HepG2 (cell line): ENCODE measurements at regions of chr7 and their contacts with region 1.

Region 1: GRCh38 chr7:128783143-128783861 is 7.7 kb upstream of the OPN1SW start:
- DNase-seq: peak; percentile 61
- ATAC-seq: peak; percentile 82
- H3K4me3 ChIP-seq: peak overlapping the region in 2 of 3 experiments; percentile 50 to 51; a peak in 4 of 6 replicates
- H3K27ac ChIP-seq: no peak overlapping the region
- H3K4me1 ChIP-seq: peaks cover 15% of the 10 kb centered on the region
- H3K27me3 ChIP-seq: no peaks in the 10 kb centered on the region
- CTCF ChIP-seq: no peak
- EP300 ChIP-seq: no peak
- POLR2A ChIP-seq: no peak
- RAD21 ChIP-seq: no peak

Region 2: DNA sequence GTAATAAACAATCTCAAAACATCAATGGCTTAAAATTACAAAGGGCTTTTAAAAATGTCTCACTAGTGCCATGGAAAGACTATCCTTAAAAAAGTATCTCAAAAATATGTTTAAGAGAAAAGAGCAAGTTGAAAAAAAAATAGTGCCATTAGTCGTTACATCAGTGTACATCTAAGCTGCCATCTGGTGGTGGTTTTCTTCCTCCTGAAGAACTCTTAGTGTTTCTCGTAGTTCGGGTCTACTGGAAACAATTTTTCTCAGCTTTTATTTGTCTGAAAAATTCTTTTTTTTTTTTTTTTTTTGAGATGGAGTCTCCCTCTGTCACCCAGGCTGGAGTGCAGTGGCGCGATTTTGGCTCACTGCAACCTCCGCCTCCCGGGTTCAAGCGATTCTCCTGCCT is 117.1 kb before region 1 on chr7:
- CTCF ChIA-PET with region 1: no interaction called
- POLR2A ChIA-PET with region 1: no interaction called
- in situ Hi-C with region 1: no loop called
- intact Hi-C with region 1: no loop called
- DNase-seq: peak; percentile 33
- ATAC-seq: peak; percentile 56
- H3K4me3 ChIP-seq: no peak overlapping the region
- H3K27ac ChIP-seq: no peak overlapping the region
- H3K4me1 ChIP-seq: no peaks in the 10 kb centered on the region
- H3K27me3 ChIP-seq: no peaks in the 10 kb centered on the region
- CTCF ChIP-seq: peak; percentile 43
- EP300 ChIP-seq: no peak
- POLR2A ChIP-seq: no peak
- RAD21 ChIP-seq: no peak

Region 3: GRCh38 chr7:128794020-128794419 is 10.7 kb after region 1 on chr7:
- CTCF ChIA-PET with region 1: no interaction called
- POLR2A ChIA-PET with region 1: no interaction called
- in situ Hi-C with region 1: no loop called
- intact Hi-C with region 1: no loop called
- DNase-seq: no peak
- ATAC-seq: no peak
- H3K4me3 ChIP-seq: no peak overlapping the region
- H3K27ac ChIP-seq: no peak overlapping the region
- H3K4me1 ChIP-seq: peaks cover 10% of the 10 kb centered on the region
- H3K27me3 ChIP-seq: peaks cover 7 to 36% of the 10 kb centered on the region in 2 experiments; a peak in 4 of 5 replicates
- CTCF ChIP-seq: peak; percentile 53
- EP300 ChIP-seq: no peak
- POLR2A ChIP-seq: no peak
- RAD21 ChIP-seq: no peak

Region 4: GRCh38 chr7:128841921-128842651 is 58.8 kb after region 1 on chr7:
- CTCF ChIA-PET with region 1: no interaction called
- POLR2A ChIA-PET with region 1: no interaction called
- in situ Hi-C with region 1: no loop called
- intact Hi-C with region 1: no loop called
- DNase-seq: no peak
- ATAC-seq: peak; percentile 64
- H3K4me3 ChIP-seq: no peak overlapping the region; a peak in 1 of 6 replicates
- H3K27ac ChIP-seq: no peak overlapping the region
- H3K4me1 ChIP-seq: peaks cover 11% of the 10 kb centered on the region
- H3K27me3 ChIP-seq: peaks cover 5 to 15% of the 10 kb centered on the region in 2 experiments; a peak in 2 of 5 replicates
- CTCF ChIP-seq: peak; percentile 68
- EP300 ChIP-seq: no peak
- POLR2A ChIP-seq: no peak
- RAD21 ChIP-seq: 0 out of 2 replicates have a peak, but pooled peaks have one; percentile 40

Region 5: DNA sequence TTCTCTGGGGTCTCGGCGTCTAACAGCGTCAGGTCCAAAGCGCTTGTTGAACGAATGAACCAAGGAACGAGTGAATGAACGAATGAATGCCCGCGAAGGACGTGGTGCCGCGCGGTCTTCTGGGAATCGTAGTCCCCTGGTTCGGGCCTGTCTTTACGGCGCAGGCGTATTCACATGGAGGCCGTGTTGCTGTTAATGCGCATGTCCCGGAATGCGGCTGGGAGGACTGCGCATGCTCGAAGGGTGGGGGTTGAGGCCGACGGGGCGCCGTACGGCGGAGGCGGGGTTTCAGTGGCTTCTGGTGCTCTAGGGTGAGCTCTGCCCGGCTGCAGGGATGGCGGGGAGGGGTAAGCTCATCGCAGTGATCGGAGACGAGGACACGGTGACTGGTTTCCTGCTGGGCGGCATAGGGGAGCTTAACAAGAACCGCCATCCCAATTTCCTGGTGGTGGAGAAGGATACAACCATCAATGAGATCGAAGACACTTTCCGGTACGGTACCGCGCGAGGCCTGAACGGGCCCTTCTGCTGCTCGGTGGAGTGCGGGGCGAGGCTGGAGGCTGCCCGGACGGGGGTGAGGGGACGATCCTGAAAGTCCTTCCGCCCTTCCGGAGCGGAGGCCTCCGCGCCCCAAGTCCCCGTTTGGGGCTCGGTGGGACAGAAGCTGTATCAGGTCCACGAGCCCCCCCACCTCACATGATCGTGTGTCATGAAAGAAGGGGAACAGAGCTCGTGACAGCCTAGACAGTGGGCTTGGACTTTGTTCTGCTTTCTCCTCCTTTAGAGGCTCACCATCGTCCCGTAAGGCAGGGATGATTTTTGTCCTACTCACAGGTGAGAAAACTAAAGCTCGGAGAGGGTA is 79.5 kb after region 1 on chr7 and contains the start of gene ATP6V1F:
- CTCF ChIA-PET with region 1: no interaction called
- POLR2A ChIA-PET with region 1: no interaction called
- in situ Hi-C with region 1: no loop called
- intact Hi-C with region 1: loop called (anchors 10 kb)
- DNase-seq: peak; percentile 93
- ATAC-seq: peak; percentile 89
- H3K4me3 ChIP-seq: peak within 1 kb of the TSS; percentile 72 to 91 (median 81)
- H3K27ac ChIP-seq: peak within 1 kb of the TSS; percentile 39
- H3K4me1 ChIP-seq: peaks cover 22% of the 10 kb centered on the region
- H3K27me3 ChIP-seq: peaks cover 0 to 10% of the 10 kb centered on the region in 2 experiments; a peak in 4 of 5 replicates
- CTCF ChIP-seq: no peak
- EP300 ChIP-seq: no peak
- POLR2A ChIP-seq: peak; percentile 53 to 82
- RAD21 ChIP-seq: no peak
- total RNA-seq, gene ATP6V1F: 87.2 and 107 TPM in 2 replicates